ENCODE measurements at regions of chr15 and their contacts with region 1.

Region 1: DNA sequence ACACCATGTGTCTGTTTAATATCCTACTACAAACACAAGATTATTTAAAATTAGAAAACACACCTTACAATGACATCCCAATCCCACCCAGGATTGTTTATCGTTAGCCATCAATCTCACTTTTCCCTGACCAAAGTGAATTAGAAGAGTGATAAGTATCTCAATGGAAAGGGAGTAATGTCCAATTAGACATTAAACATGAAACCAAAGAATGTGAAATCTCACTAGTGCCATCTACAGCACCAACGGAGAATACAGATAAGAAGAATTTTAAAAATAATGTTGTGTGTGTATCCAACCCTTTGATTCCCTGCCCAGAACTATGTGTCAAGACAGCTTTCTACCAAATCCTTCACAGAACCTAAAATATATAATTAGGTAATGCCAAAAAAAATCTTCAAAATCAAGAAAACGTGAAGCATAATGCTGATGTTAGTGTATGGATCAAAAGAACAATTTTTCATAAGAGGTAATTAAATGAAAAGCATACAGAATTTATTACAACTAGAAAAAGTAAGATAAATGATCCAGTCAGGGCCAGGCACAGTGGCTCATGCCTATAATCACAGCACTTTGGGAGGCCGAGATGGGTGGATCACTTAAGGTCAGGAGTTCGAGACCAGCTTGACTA is 64.2 kb downstream of the SCAPER start:
- DNase-seq: peak; percentile 51
- H3K4me3 ChIP-seq: no peak overlapping the region
- H3K27ac ChIP-seq: no peak overlapping the region
- H3K4me1 ChIP-seq: no peaks in the 10 kb centered on the region
- H3K27me3 ChIP-seq: no peaks in the 10 kb centered on the region
- CTCF ChIP-seq: peak; percentile 29 to 35
- POLR2A ChIP-seq: no peak

Region 2: DNA sequence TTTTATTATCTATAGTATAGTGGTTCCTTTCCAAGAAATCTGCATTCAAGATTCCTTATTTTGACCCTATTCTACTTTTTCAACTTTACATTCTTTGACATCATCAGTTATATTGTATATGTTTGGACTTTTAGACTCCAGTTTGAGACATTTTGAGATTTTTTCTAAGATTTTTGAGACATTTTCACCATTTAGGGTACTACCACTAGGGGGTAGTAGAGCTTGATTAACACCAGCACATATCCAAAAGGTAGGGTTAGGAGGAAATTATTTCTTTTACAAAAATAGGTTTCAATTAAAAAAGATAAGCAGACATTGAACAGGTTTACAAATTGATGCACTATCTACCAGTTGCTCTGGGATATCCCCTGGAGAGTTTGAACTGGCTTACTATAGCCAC is 198.3 kb before region 1 on chr15:
- CTCF ChIA-PET with region 1: no interaction called
- POLR2A ChIA-PET with region 1: no interaction called
- dilution Hi-C with region 1: no loop called
- intact Hi-C with region 1: loop called (anchors 10 kb)
- DNase-seq: no peak
- H3K4me3 ChIP-seq: no peak overlapping the region
- H3K27ac ChIP-seq: no peak overlapping the region
- H3K4me1 ChIP-seq: no peaks in the 10 kb centered on the region
- H3K27me3 ChIP-seq: no peaks in the 10 kb centered on the region
- CTCF ChIP-seq: peak; percentile 9 to 14
- POLR2A ChIP-seq: no peak

Region 3: GRCh38 chr15:76815401-76815800 is 25.5 kb before region 1 on chr15:
- CTCF ChIA-PET with region 1: no interaction called
- POLR2A ChIA-PET with region 1: no interaction called
- dilution Hi-C with region 1: no loop called
- intact Hi-C with region 1: no loop called
- DNase-seq: no peak
- H3K4me3 ChIP-seq: no peak overlapping the region
- H3K27ac ChIP-seq: no peak overlapping the region
- H3K4me1 ChIP-seq: no peaks in the 10 kb centered on the region
- H3K27me3 ChIP-seq: no peaks in the 10 kb centered on the region
- CTCF ChIP-seq: no peak
- POLR2A ChIP-seq: no peak

Measured in endothelial cell of umbilical vein (primary cell).